Left ventricle myocardium superior (tissue), 1 donor: ENCODE measurements at regions of chr17 and their contacts with region 1.

Region 1: GRCh38 chr17:59311130-59311920 is 20.1 kb upstream of the YPEL2 start:
- DNase-seq: no peak
- ATAC-seq: peak; percentile 97

Region 2: GRCh38 chr17:59440784-59441441 is 129.6 kb after region 1 on chr17:
- intact Hi-C with region 1: loop called (anchors 5 kb)
- DNase-seq: peak; percentile 86
- ATAC-seq: peak; percentile 90